Astrocyte of the cerebellum (primary cell): ENCODE measurements at regions of chr10 and their contacts with region 1.

Region 1: DNA sequence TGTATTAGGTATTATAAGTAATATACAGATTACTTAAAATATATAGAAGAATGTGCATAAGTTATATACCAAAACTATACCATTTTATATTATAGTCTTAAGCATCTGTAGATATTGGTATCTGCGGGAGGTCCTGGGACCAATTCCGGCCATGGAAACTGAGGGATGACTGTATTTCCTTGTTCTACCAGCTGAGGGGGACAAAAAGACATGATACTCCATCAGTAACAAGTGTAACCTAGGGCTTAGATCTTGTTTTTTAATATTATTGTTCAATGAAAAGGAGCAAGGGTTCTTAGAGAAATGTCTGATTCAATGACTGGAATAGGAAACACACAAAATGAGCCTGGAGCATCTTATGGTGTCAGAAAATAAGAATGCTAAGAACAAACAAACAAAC is 752.5 kb downstream of the CCSER2 start:
- DNase-seq: no peak
- H3K4me3 ChIP-seq: no peak overlapping the region
- CTCF ChIP-seq: no peak

Region 2: DNA sequence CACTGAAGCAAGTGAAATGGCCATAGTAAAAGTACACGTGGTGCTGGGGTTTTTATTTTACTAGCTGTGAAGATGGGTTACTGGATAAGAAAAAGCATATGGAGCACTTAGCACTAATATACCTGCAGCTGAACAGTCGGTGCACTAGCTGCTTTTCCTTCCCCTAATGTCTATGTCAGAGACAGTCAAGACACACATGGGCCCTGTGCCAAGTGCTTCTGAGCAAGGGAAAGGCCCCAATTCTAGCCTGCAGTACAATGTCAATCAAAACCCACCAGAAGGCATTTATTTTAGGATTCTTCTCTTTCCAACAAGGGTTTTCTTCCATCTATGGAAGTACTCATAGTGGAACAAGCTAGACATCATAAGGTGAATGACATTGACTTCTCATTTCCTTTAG is 35.9 kb before region 1 on chr10:
- in situ Hi-C with region 1: loop called (anchors 5 kb)
- DNase-seq: no peak
- H3K4me3 ChIP-seq: no peak overlapping the region
- CTCF ChIP-seq: no peak

Region 3: DNA sequence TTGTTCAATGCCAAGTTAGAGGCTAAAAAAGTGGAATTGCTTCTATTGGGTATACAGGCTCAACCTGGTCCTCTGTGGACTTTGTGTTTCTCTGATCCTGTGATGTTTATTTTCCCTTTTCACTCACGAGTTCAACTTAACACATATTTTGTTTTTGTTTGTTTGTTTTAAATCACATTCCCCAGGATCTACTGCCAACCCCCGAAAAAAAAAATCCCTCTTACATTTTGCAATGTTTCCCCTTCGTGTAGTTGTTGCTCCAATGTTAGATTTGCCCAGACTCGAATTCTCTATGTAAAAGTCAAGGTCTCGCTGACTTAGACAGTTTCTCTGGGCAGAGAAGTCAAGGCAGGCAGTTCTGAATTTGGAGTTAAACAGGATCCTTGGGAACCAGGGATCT is 123.9 kb after region 1 on chr10:
- in situ Hi-C with region 1: no loop called
- DNase-seq: no peak
- H3K4me3 ChIP-seq: no peak overlapping the region
- CTCF ChIP-seq: no peak